ENCODE measurements at regions of chr9 and their contacts with region 1.

Region 1: GRCh38 chr9:4984621-4985385 is at the start of gene JAK2:
- DNase-seq: peak; percentile 91
- H3K4me3 ChIP-seq: peak within 1 kb of the TSS; percentile 70 to 94 (median 82)
- H3K27ac ChIP-seq: peak within 1 kb of the TSS; percentile 97 to 99 (median 98)
- H3K4me1 ChIP-seq: peaks cover 20 to 53% (median 37%) of the 10 kb centered on the region in 4 donors
- H3K27me3 ChIP-seq: no peaks in the 10 kb centered on the region
- CTCF ChIP-seq: peak in 3 of 5 experiments; percentile 23 to 30 (median 25)
- EP300 ChIP-seq: no peak
- POLR2A ChIP-seq: peak; percentile 88
- total RNA-seq, gene JAK2: 8.0 to 27.6 (median 17.4) TPM

Region 2: GRCh38 chr9:4092793-4093709 is 891.8 kb before region 1 on chr9:
- in situ Hi-C with region 1: no loop called
- intact Hi-C with region 1: loop called (anchors 5 kb)
- DNase-seq: no peak
- H3K4me3 ChIP-seq: no peak overlapping the region
- H3K27ac ChIP-seq: peak overlapping the region; percentile 54 to 85 (median 66)
- H3K4me1 ChIP-seq: peaks cover 22 to 36% (median 29%) of the 10 kb centered on the region in 4 donors
- H3K27me3 ChIP-seq: no peaks in the 10 kb centered on the region
- CTCF ChIP-seq: no peak
- EP300 ChIP-seq: no peak
- POLR2A ChIP-seq: no peak

Region 3: DNA sequence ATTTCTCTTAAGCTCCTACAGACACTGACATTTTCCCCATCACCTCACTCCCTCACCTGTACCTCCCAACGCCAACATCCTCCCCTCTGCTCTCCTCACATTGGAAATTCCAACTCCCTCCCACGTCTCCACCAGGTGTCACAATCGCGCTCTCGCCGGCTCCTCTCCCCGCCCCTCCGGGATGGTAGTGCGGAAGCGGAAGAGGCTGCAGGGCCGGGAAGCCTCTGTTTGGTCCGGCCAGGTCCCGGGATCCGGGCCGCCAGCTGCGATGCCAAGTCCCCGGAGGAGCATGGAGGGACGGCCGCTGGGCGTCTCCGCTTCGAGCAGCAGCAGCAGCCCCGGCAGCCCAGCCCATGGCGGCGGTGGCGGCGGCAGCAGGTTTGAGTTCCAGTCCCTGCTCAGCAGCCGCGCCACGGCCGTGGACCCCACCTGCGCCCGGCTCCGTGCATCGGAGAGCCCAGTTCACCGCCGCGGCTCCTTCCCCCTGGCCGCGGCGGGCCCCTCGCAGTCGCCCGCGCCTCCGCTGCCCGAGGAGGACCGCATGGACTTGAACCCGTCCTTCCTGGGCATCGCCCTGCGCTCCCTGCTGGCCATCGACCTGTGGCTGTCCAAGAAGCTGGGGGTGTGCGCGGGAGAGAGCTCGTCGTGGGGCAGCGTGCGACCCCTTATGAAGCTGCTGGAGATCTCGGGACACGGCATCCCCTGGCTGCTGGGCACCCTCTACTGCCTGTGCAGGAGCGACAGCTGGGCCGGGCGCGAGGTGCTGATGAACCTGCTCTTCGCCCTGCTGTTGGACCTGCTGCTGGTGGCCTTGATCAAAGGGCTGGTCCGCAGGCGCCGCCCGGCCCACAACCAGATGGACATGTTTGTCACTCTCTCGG is 322.5 kb before region 1 on chr9 and contains the start of gene PLPP6:
- in situ Hi-C with region 1: loop called in 1 of 4 experiments (anchors 25 kb)
- intact Hi-C with region 1: no loop called
- DNase-seq: peak; percentile 93
- H3K4me3 ChIP-seq: peak within 1 kb of the TSS; percentile 62 to 99 (median 82)
- H3K27ac ChIP-seq: peak within 1 kb of the TSS; percentile 87 to 94 (median 92)
- H3K4me1 ChIP-seq: peaks cover 3 to 54% (median 30%) of the 10 kb centered on the region in 4 donors
- H3K27me3 ChIP-seq: no peaks in the 10 kb centered on the region
- CTCF ChIP-seq: peak; percentile 46 to 71 (median 55)
- EP300 ChIP-seq: no peak
- POLR2A ChIP-seq: peak; percentile 87
- total RNA-seq, gene PLPP6: 7.1 to 22.7 (median 16.3) TPM

Region 4: GRCh38 chr9:4750023-4750673 is 234.7 kb before region 1 on chr9:
- in situ Hi-C with region 1: loop called in 3 of 4 experiments (anchors 10 to 25 kb)
- intact Hi-C with region 1: no loop called
- DNase-seq: no peak
- H3K4me3 ChIP-seq: no peak overlapping the region
- H3K27ac ChIP-seq: no peak overlapping the region
- H3K4me1 ChIP-seq: no peaks in the 10 kb centered on the region
- H3K27me3 ChIP-seq: no peaks in the 10 kb centered on the region
- CTCF ChIP-seq: peak; percentile 44 to 63 (median 52)
- EP300 ChIP-seq: no peak
- POLR2A ChIP-seq: no peak

Region 5: GRCh38 chr9:4762108-4762885 is 222.5 kb before region 1 on chr9:
- in situ Hi-C with region 1: loop called (anchors 10 to 25 kb)
- intact Hi-C with region 1: loop called (anchors 5 kb)
- DNase-seq: peak; percentile 89
- H3K4me3 ChIP-seq: peak overlapping the region in 3 of 4 donors; percentile 8 to 36 (median 19)
- H3K27ac ChIP-seq: peak overlapping the region; percentile 57 to 76 (median 66)
- H3K4me1 ChIP-seq: peaks cover 0 to 14% (median 4%) of the 10 kb centered on the region in 4 donors
- H3K27me3 ChIP-seq: no peaks in the 10 kb centered on the region
- CTCF ChIP-seq: peak; percentile 75 to 92 (median 86)
- EP300 ChIP-seq: no peak
- POLR2A ChIP-seq: no peak

Region 6: DNA sequence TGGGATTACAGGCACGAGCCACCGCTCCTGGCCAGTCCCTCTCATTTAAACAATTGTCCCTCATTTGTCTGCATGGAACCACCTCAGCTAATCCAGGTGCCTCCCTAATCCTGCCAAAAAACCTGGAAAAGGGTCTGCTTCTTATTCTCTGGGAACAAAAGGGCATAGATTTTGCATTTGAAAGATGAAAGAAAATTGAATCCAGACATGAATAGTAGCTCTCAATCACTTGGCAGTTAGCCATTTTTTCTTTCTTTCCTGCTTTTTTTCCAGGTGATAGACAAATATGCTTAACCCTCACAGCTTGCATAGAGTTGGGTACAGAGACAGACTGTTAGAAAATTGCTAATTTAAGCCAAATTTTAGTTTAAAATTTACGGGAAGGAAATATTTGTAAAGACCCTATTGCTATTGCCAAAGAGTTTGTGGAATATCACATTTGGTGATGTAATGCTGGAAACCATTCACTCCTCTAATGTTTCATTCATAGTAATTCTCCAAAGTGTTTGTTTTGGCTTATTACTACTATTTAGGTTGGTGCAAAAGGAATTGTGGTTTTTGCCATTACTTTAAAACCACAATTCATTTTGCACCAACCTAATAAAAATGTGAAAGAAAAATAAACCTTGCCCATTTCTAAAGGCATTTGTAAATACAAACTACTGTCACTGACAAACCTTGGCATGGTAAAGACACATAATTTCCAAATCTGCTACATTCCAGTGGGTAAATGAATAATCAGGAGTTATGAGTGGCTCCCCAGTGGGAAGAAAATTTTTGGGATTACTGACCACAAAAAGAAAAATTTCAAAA is 80.3 kb before region 1 on chr9:
- in situ Hi-C with region 1: no loop called
- intact Hi-C with region 1: no loop called
- DNase-seq: no peak
- H3K4me3 ChIP-seq: no peak overlapping the region
- H3K27ac ChIP-seq: no peak overlapping the region
- H3K4me1 ChIP-seq: peaks cover 0 to 3% (median 0%) of the 10 kb centered on the region in 4 donors
- H3K27me3 ChIP-seq: no peaks in the 10 kb centered on the region
- CTCF ChIP-seq: no peak
- EP300 ChIP-seq: no peak
- POLR2A ChIP-seq: no peak

Region 7: DNA sequence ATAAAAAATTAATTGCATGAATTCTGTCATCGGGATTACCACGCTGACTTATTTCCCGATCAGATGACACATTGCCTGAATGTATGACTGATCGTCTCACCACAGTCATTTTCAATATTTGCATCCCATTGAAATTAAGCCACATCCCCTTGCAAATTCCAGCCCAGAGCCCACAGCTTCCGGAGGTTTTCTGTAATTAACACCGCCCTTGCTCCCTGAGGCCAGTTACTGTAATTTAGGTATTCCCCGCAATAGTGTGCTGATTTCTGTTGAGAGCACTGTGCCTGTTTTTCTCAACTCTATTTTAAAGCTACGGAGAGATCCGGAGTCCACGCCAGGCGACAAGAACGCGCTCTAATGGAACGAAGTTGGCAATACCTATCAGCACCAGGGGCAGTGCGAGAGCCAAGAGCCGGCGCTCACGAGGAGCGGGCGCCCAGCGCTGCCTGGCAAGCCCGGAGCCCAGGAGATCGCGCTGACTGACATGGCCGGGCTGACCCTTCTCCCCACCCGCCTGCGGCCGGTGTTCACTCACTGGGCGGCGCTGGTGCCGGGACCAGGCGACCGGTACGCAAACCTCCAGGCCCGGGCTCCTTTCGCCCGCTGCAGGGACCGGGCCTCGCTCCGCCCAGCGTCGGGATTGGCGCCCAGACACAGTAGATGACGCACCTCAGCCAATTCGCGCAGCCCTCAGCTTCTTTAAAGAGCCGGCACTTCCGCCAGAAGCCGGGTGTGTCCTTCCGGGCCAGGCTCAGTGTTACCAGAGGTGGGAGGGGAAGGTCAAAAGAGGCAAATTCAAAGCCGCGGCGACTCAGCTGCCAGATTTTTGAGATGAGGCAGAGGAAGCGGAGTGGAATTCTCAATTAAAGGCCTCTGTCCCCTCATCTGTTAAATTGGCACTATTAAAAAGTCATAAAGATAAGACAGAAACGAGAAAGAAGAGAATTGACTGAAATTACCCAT is 452.7 kb after region 1 on chr9 and contains the start of gene PLGRKT:
- in situ Hi-C with region 1: loop called in 1 of 4 experiments (anchors 25 kb)
- intact Hi-C with region 1: no loop called
- DNase-seq: peak; percentile 96
- H3K4me3 ChIP-seq: peak within 1 kb of the TSS; percentile 55 to 61 (median 57)
- H3K27ac ChIP-seq: peak within 1 kb of the TSS; percentile 91 to 97 (median 95)
- H3K4me1 ChIP-seq: peaks cover 6 to 21% (median 13%) of the 10 kb centered on the region in 4 donors
- H3K27me3 ChIP-seq: no peaks in the 10 kb centered on the region
- CTCF ChIP-seq: peak in 4 of 5 experiments; percentile 11 to 38 (median 17)
- EP300 ChIP-seq: no peak
- POLR2A ChIP-seq: peak; percentile 97
- total RNA-seq, gene PLGRKT: 1.6 to 58.3 (median 16.5) TPM

Region 8: DNA sequence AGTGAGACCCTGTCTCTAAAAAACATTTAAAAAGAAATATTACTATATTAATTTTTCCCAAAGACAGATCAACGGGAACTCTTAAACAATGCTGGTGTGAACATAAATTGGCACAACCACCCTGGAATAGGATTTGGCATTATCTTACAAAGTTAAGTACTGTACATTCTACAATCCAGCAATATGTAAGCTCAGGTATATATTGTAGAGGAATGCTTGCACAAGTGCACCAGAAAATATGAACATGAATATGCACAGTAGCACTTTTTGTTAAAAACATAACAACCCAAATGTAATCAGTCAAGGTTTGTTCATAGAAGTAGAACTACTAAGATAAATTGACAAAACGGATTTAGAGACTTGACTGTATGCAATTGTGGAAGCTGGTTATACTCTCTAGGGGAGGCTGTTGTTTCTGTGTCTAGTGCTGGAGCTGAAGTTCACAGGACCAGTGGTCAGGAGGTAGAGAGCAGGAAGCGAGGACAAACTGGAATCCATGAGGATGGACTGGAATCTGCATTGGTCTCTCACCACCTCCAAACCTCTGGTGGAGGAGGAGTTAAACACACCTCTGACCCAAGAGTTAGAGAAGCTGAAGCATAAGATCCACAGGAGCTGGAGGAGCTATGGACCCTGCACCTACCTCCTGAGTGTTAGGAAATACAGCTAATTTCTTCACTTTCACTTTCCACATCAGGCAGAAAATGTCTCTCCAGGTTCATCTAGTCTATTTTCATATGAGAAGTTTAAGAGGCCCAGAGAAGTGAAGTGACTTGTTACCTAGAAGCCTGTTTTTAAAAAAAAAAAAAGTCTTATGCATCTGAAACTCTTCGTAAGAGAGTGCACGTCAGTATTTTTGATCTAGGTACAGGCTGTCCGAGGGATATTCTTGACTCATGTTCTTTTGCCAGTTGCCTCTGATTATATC is 623.8 kb after region 1 on chr9:
- in situ Hi-C with region 1: loop called in 2 of 4 experiments (anchors 25 kb)
- intact Hi-C with region 1: no loop called
- DNase-seq: no peak
- H3K4me3 ChIP-seq: peak overlapping the region in 3 of 4 donors; percentile 6 to 23 (median 18)
- H3K27ac ChIP-seq: peak overlapping the region in 2 of 4 donors; percentile 23 to 40
- H3K4me1 ChIP-seq: no peaks in the 10 kb centered on the region
- H3K27me3 ChIP-seq: no peaks in the 10 kb centered on the region
- CTCF ChIP-seq: no peak
- EP300 ChIP-seq: no peak
- POLR2A ChIP-seq: no peak